Heart left ventricle (tissue), 16 donors: ENCODE measurements at regions of chr6 and their contacts with region 1.

Region 1: GRCh38 chr6:116969211-116969863 is 92.3 kb downstream of the RFX6 start:
- DNase-seq: peak in 1 of 5 donors; percentile 15
- ATAC-seq: no peak
- H3K4me3 ChIP-seq: no peak overlapping the region
- H3K27ac ChIP-seq: no peak overlapping the region
- H3K4me1 ChIP-seq: no peaks in the 10 kb centered on the region
- H3K27me3 ChIP-seq: peaks cover 0 to 6% (median 0%) of the 10 kb centered on the region in 9 donors
- CTCF ChIP-seq: peak; percentile 46 to 73 (median 60)
- POLR2A ChIP-seq: no peak

Region 2: GRCh38 chr6:116779573-116780164 is 189.7 kb before region 1 on chr6:
- intact Hi-C with region 1: loop called in 6 of 10 experiments (anchors 5 to 10 kb)
- DNase-seq: no peak
- ATAC-seq: no peak
- H3K4me3 ChIP-seq: peak overlapping the region in 3 of 12 donors; percentile 8 to 32 (median 14)
- H3K27ac ChIP-seq: no peak overlapping the region
- H3K4me1 ChIP-seq: no peaks in the 10 kb centered on the region
- H3K27me3 ChIP-seq: peaks cover 0 to 6% (median 0%) of the 10 kb centered on the region in 9 donors
- CTCF ChIP-seq: peak; percentile 17 to 62 (median 40)
- POLR2A ChIP-seq: no peak

Region 3: DNA sequence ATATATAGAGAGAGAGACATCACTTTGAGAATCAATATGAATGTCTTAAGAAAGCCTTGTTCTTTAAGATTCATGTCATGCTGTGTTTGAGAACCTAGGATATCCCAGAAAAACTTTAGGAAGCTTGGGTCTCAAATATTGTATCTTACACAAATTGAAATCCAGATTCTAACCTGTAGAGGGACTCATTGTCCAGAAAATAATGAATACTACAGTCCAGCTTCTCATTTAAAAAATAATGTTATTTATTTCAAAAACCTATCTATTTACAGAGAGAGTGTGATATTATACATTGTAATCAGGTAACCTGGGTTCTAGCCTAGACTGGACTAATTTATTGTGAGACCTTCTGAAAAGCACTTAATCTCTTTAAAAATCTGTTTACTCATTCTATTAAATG is 88.1 kb before region 1 on chr6:
- intact Hi-C with region 1: loop called in 1 of 10 experiments (anchors 5 kb)
- DNase-seq: no peak
- ATAC-seq: no peak
- H3K4me3 ChIP-seq: no peak overlapping the region
- H3K27ac ChIP-seq: no peak overlapping the region
- H3K4me1 ChIP-seq: peaks cover 0 to 12% (median 1%) of the 10 kb centered on the region in 12 donors
- H3K27me3 ChIP-seq: peaks cover 15 to 35% (median 19%) of the 10 kb centered on the region in 9 donors
- CTCF ChIP-seq: peak in 4 of 12 donors; percentile 8 to 28 (median 16)
- POLR2A ChIP-seq: no peak

Region 4: DNA sequence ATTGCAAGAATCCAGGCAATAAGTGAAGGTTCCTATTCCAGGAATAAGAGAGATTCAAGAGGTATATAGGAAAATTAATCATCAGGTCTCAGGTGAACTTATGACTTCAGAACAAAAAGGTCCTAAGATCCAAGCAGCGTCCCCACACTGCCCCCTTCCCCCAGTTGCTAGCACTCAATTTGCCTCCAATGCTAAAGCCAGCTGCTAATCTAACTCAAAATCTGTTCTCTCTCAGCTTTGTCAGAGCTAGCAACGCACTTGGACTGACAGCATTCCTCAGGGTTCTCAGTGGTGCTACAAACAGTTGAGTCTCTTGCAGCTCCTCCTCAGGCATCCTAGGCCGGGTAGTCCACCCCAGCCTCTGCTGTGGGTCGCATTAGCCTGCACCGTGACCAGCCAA is 56.0 kb after region 1 on chr6:
- intact Hi-C with region 1: no loop called
- DNase-seq: no peak
- ATAC-seq: no peak
- H3K4me3 ChIP-seq: no peak overlapping the region
- H3K27ac ChIP-seq: no peak overlapping the region
- H3K4me1 ChIP-seq: no peaks in the 10 kb centered on the region
- H3K27me3 ChIP-seq: no peaks in the 10 kb centered on the region
- CTCF ChIP-seq: no peak
- POLR2A ChIP-seq: no peak

Region 5: GRCh38 chr6:117167520-117168271 is 198.4 kb after region 1 on chr6:
- intact Hi-C with region 1: loop called in 1 of 10 experiments (anchors 10 kb)
- DNase-seq: peak in 1 of 5 donors; percentile 14
- ATAC-seq: peak in 2 of 4 donors; percentile 50 to 52
- H3K4me3 ChIP-seq: no peak overlapping the region
- H3K27ac ChIP-seq: peak overlapping the region in 1 of 12 donors; percentile 17
- H3K4me1 ChIP-seq: peaks cover 0 to 16% (median 0%) of the 10 kb centered on the region in 12 donors
- H3K27me3 ChIP-seq: no peaks in the 10 kb centered on the region
- CTCF ChIP-seq: no peak
- POLR2A ChIP-seq: no peak

Region 6: GRCh38 chr6:117188627-117189201 is 219.4 kb after region 1 on chr6:
- intact Hi-C with region 1: loop called in 8 of 10 experiments (anchors 2 to 10 kb)
- DNase-seq: no peak
- ATAC-seq: no peak
- H3K4me3 ChIP-seq: no peak overlapping the region
- H3K27ac ChIP-seq: no peak overlapping the region
- H3K4me1 ChIP-seq: no peaks in the 10 kb centered on the region
- H3K27me3 ChIP-seq: no peaks in the 10 kb centered on the region
- CTCF ChIP-seq: peak; percentile 15 to 55 (median 38)
- POLR2A ChIP-seq: no peak

Region 7: GRCh38 chr6:117194978-117195377 is 225.6 kb after region 1 on chr6:
- intact Hi-C with region 1: loop called in 6 of 10 experiments (anchors 5 to 10 kb)
- DNase-seq: no peak
- ATAC-seq: no peak
- H3K4me3 ChIP-seq: no peak overlapping the region
- H3K27ac ChIP-seq: no peak overlapping the region
- H3K4me1 ChIP-seq: peaks cover 0 to 12% (median 0%) of the 10 kb centered on the region in 12 donors
- H3K27me3 ChIP-seq: no peaks in the 10 kb centered on the region
- CTCF ChIP-seq: no peak
- POLR2A ChIP-seq: no peak

Region 8: DNA sequence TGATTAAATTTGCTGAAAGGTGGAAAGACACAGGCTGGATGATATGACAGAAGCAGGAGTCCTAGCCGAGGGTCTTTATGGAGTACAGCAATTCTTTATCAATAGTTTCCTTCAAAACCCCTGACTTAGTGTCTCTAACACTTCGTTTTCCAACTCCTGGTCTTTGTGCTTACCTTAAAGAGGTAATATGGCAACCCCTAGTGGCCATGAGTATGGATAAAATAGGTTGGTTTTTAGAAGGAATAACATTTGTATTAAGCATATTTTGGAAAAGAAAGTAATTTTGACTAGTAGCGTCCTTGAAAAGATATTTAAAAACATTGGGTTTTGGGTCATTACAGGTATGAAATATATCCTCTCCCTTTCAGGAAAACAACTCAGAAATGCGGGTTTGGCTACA is 347.9 kb after region 1 on chr6:
- intact Hi-C with region 1: loop called (anchors 2 to 10 kb)
- DNase-seq: no peak
- ATAC-seq: no peak
- H3K4me3 ChIP-seq: no peak overlapping the region
- H3K27ac ChIP-seq: no peak overlapping the region
- H3K4me1 ChIP-seq: no peaks in the 10 kb centered on the region
- H3K27me3 ChIP-seq: no peaks in the 10 kb centered on the region
- CTCF ChIP-seq: peak in 11 of 12 donors; percentile 10 to 55 (median 41)
- POLR2A ChIP-seq: no peak